Right cardiac atrium (tissue), 5 donors: ENCODE measurements at regions of chr2 and their contacts with region 1.

Region 1: GRCh38 chr2:226661789-226662545 is 137.7 kb downstream of the IRS1 start:
- DNase-seq: peak; percentile 37 to 72 (median 56)
- ATAC-seq: peak; percentile 65 to 83
- H3K4me3 ChIP-seq: no peak overlapping the region
- H3K27ac ChIP-seq: peak overlapping the region; percentile 72
- H3K4me1 ChIP-seq: peaks cover 5% of the 10 kb centered on the region
- H3K27me3 ChIP-seq: no peaks in the 10 kb centered on the region

Region 2: GRCh38 chr2:226548732-226549131 is 113.2 kb before region 1 on chr2:
- intact Hi-C with region 1: no loop called
- DNase-seq: no peak
- ATAC-seq: no peak
- H3K4me3 ChIP-seq: no peak overlapping the region
- H3K27ac ChIP-seq: no peak overlapping the region
- H3K4me1 ChIP-seq: peaks cover 4% of the 10 kb centered on the region
- H3K27me3 ChIP-seq: no peaks in the 10 kb centered on the region

Region 3: DNA sequence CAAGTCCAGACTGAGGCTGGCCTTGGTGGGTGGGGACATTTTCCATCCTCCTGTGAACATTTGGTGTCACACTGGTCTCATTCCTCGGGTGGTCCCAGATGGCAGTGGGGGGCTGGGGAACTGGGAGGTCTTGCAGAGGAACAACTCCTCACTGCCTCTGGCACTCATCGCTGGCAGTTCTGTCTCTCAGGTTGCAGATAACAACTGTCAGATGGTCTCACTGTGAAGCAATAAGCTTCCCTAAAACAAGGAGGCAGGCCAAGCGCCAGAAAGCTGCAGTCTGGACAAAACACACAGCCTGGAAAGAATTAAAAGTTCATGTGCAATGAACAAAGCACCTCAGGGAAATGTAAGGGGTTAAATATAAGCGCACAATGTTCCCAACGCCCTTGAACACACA is 59.6 kb after region 1 on chr2:
- intact Hi-C with region 1: loop called in 1 of 4 experiments (anchors 10 kb)
- DNase-seq: peak; percentile 47 to 83 (median 75)
- ATAC-seq: peak in 1 of 2 donors; percentile 35
- H3K4me3 ChIP-seq: no peak overlapping the region
- H3K27ac ChIP-seq: no peak overlapping the region
- H3K4me1 ChIP-seq: peaks cover 2% of the 10 kb centered on the region
- H3K27me3 ChIP-seq: no peaks in the 10 kb centered on the region